ENCODE measurements at regions of chr10 and their contacts with region 1.

Region 1: DNA sequence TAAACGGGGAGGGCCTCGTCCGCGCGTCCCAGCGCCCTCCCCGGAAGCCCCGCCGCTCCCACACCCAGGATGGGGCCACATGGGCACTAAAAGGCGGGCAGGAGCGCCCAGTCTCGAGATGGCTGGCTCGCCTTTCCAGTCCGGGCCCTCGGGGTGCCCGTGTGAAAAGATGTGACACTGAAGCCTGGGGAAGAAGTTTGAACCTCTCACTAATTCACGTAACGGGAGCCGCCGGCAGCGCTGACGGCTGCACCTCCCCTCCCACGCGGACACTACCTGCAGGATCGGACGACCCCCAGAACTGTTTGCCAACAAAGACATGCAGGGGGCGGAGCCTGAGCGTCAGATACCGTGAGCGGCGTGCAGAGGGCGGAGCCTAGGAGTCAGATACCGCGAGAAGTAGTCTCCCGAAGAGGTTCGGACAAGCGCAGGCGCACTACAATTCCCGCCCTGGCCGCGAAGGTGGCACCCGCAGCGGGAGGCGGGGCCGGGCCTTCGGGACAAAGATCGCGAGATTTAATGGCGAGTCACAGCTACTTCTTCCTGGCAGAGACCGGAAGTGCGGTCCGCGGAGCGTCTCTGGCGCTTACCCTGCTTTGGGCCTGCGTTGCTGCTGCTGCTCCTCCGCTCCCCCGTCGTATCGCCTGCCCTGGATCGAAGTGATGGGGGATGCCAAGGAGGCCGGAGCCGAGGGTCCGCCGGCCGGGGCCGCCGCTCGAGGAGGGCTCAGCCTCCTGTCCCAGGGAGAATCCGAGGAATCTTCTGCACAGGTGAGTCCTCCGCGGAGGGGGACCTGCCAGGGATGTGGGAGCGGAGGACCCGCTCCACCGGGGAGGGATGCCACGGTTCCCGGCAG is at the start of gene EDRF1:
- DNase-seq: peak; percentile 96 to 100 (median 99)
- ATAC-seq: peak; percentile 97
- H3K4me3 ChIP-seq: peak within 1 kb of the TSS; percentile 95
- H3K4me3 Mint-ChIP-seq: peak within 1 kb of the TSS; percentile 89 to 99 (median 98)
- H3K27ac ChIP-seq: peak within 1 kb of the TSS; percentile 94
- H3K27ac Mint-ChIP-seq: peak within 1 kb of the TSS; percentile 96 to 99 (median 97)
- H3K4me1 ChIP-seq: peaks cover 20 to 24% of the 10 kb centered on the region in 2 donors
- H3K4me1 Mint-ChIP-seq: peaks cover 6 to 47% (median 39%) of the 10 kb centered on the region in 7 donors
- H3K27me3 ChIP-seq: no peaks in the 10 kb centered on the region
- H3K27me3 Mint-ChIP-seq: peaks cover 0 to 3% (median 0%) of the 10 kb centered on the region in 5 donors
- total RNA-seq, gene EDRF1: 33.8 to 64.4 (median 53.8) TPM

Region 2: GRCh38 chr10:125424191-125424847 is 295.1 kb before region 1 on chr10:
- CTCF ChIA-PET with region 1: no interaction called
- POLR2A ChIA-PET with region 1: no interaction called
- intact Hi-C with region 1: no loop called
- DNase-seq: no peak
- ATAC-seq: no peak
- H3K4me3 ChIP-seq: no peak overlapping the region
- H3K4me3 Mint-ChIP-seq: no peak overlapping the region
- H3K27ac ChIP-seq: no peak overlapping the region
- H3K27ac Mint-ChIP-seq: no peak overlapping the region
- H3K4me1 ChIP-seq: no peaks in the 10 kb centered on the region
- H3K4me1 Mint-ChIP-seq: peaks cover 0 to 1% (median 0%) of the 10 kb centered on the region in 7 donors
- H3K27me3 ChIP-seq: no peaks in the 10 kb centered on the region
- H3K27me3 Mint-ChIP-seq: peaks cover 0 to 12% (median 0%) of the 10 kb centered on the region in 5 donors

Region 3: GRCh38 chr10:125700355-125700911 is 18.9 kb before region 1 on chr10:
- CTCF ChIA-PET with region 1: no interaction called
- POLR2A ChIA-PET with region 1: no interaction called
- intact Hi-C with region 1: no loop called
- DNase-seq: no peak
- ATAC-seq: no peak
- H3K4me3 ChIP-seq: no peak overlapping the region
- H3K4me3 Mint-ChIP-seq: no peak overlapping the region
- H3K27ac ChIP-seq: no peak overlapping the region
- H3K27ac Mint-ChIP-seq: no peak overlapping the region
- H3K4me1 ChIP-seq: no peaks in the 10 kb centered on the region
- H3K4me1 Mint-ChIP-seq: no peaks in the 10 kb centered on the region
- H3K27me3 ChIP-seq: no peaks in the 10 kb centered on the region
- H3K27me3 Mint-ChIP-seq: peaks cover 2 to 13% (median 7%) of the 10 kb centered on the region in 5 donors

Region 4: GRCh38 chr10:125788156-125789034 is 69.0 kb after region 1 on chr10:
- CTCF ChIA-PET with region 1: no interaction called
- POLR2A ChIA-PET with region 1: no interaction called
- intact Hi-C with region 1: no loop called
- DNase-seq: no peak
- ATAC-seq: peak; percentile 8
- H3K4me3 ChIP-seq: no peak overlapping the region
- H3K4me3 Mint-ChIP-seq: peak overlapping the region in 1 of 10 donors; percentile 25
- H3K27ac ChIP-seq: peak overlapping the region; percentile 43
- H3K27ac Mint-ChIP-seq: peak overlapping the region in 8 of 9 donors; percentile 31 to 76 (median 63)
- H3K4me1 ChIP-seq: peaks cover 8% of the 10 kb centered on the region in 2 donors
- H3K4me1 Mint-ChIP-seq: peaks cover 8 to 28% (median 17%) of the 10 kb centered on the region in 7 donors
- H3K27me3 ChIP-seq: no peaks in the 10 kb centered on the region
- H3K27me3 Mint-ChIP-seq: no peaks in the 10 kb centered on the region

Region 5: GRCh38 chr10:125822878-125823662 is 103.7 kb after region 1 on chr10 and contains the starts of genes BCCIP and UROS:
- CTCF ChIA-PET with region 1: no interaction called
- POLR2A ChIA-PET with region 1: interaction called, 9 read pairs
- intact Hi-C with region 1: loop called (anchors 1 kb)
- DNase-seq: peak; percentile 88 to 98 (median 94)
- ATAC-seq: peak; percentile 92
- H3K4me3 ChIP-seq: peak within 1 kb of the TSS; percentile 97
- H3K4me3 Mint-ChIP-seq: peak within 1 kb of the TSS in 6 of 10 donors; percentile 85 to 89 (median 87)
- H3K27ac ChIP-seq: peak within 1 kb of the TSS; percentile 76
- H3K27ac Mint-ChIP-seq: peak within 1 kb of the TSS in 8 of 9 donors; percentile 16 to 88 (median 80)
- H3K4me1 ChIP-seq: peaks cover 11 to 21% of the 10 kb centered on the region in 2 donors
- H3K4me1 Mint-ChIP-seq: peaks cover 3 to 33% (median 22%) of the 10 kb centered on the region in 7 donors
- H3K27me3 ChIP-seq: no peaks in the 10 kb centered on the region
- H3K27me3 Mint-ChIP-seq: no peaks in the 10 kb centered on the region
- total RNA-seq, gene BCCIP: 31.3 to 68.4 (median 45.8) TPM
- total RNA-seq, gene UROS: 28.9 to 53.0 (median 41.3) TPM

Region 6: GRCh38 chr10:125886914-125887515 is 167.6 kb after region 1 on chr10:
- CTCF ChIA-PET with region 1: no interaction called
- POLR2A ChIA-PET with region 1: no interaction called
- intact Hi-C with region 1: no loop called
- DNase-seq: no peak
- ATAC-seq: no peak
- H3K4me3 ChIP-seq: no peak overlapping the region
- H3K4me3 Mint-ChIP-seq: no peak overlapping the region
- H3K27ac ChIP-seq: no peak overlapping the region
- H3K27ac Mint-ChIP-seq: no peak overlapping the region
- H3K4me1 ChIP-seq: no peaks in the 10 kb centered on the region
- H3K4me1 Mint-ChIP-seq: peaks cover 0 to 3% (median 0%) of the 10 kb centered on the region in 7 donors
- H3K27me3 ChIP-seq: no peaks in the 10 kb centered on the region
- H3K27me3 Mint-ChIP-seq: no peaks in the 10 kb centered on the region